ENCODE measurements at regions of chr16 and their contacts with region 1.

Region 1: DNA sequence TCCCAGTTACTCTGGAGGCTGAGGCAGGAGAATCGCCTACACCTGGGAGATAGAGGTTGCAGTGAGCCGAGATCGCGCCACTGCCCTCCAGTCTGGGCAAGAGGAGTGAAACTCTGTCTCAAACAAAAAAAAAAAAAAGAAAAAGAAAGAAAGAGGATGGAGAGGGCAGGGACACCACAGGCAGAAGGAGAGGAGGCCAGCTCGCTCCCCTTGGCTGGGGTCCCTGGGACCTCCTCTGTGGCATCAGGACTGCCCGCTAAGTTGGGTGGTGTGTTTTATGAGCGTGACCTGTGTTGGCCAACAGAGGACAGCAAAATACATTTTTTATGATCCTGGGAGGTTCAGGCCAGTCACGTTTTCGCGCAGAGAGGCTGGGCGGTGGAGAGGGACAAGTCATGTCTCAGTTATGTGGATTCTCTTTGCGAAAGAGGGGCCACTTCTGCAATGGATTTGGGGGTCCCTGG is 229.6 kb downstream of the MRTFB start:
- DNase-seq: peak in 9 of 10 donors; percentile 29 to 95 (median 59)

Region 2: GRCh38 chr16:13594823-13595222 is 705.9 kb before region 1 on chr16:
- intact Hi-C with region 1: no loop called
- DNase-seq: no peak

Region 3: GRCh38 chr16:14364386-14365204 is 63.9 kb after region 1 on chr16:
- intact Hi-C with region 1: no loop called
- DNase-seq: peak in 3 of 10 donors; percentile 25 to 88 (median 76)

Region 4: GRCh38 chr16:14632692-14633569 is 332.2 kb after region 1 on chr16 and contains the start of gene BFAR:
- intact Hi-C with region 1: loop called (anchors 10 kb)
- DNase-seq: peak; percentile 99 to 100 (median 99)

Measured in posterior cingulate gyrus (tissue), 11 donors.